PC-9 (cell line): ENCODE measurements at regions of chr6 and their contacts with region 1.

Region 1: DNA sequence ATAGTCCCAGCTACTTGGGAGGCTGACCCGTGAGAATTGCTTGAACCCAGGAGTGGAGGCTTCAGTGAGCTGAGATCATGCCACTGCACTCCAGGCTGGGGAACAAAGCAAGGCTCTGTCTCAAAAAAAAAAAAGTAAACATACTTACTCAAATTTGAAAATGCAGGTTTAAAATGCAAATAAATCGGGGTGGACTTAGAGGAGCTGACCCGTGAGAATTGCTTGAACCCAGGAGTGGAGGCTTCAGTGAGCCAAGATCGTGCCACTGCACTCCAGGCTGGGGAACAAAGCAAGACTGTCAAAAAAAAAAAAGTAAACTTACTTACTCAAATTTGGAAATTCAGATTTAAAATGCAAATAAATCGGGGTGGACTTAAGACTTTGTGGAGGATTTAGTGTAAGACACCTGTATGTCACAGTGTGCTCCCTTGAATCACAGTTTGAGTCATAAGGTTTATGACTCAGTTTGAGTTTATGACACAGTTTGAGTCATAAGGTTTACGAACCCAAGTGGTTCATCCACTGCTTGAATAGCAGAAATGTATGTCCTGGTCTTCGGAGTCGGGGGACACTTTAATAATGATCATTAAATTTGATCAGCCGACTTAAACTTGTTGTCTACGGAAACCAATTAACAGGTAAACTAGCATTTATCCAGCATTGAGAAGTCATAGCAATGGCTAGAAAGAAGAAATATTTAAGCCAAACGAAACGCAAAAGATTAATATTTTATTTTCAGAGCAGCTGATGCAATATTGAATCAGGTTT is 6.7 kb upstream of the MRPS10 start:
- DNase-seq: peak; percentile 20 to 97
- H3K4me3 ChIP-seq: peak overlapping the region; percentile 61
- H3K27ac ChIP-seq: peak overlapping the region; percentile 99
- H3K4me1 ChIP-seq: peaks cover 97% of the 10 kb centered on the region
- H3K27me3 ChIP-seq: no peaks in the 10 kb centered on the region
- CTCF ChIP-seq: no peak

Region 2: DNA sequence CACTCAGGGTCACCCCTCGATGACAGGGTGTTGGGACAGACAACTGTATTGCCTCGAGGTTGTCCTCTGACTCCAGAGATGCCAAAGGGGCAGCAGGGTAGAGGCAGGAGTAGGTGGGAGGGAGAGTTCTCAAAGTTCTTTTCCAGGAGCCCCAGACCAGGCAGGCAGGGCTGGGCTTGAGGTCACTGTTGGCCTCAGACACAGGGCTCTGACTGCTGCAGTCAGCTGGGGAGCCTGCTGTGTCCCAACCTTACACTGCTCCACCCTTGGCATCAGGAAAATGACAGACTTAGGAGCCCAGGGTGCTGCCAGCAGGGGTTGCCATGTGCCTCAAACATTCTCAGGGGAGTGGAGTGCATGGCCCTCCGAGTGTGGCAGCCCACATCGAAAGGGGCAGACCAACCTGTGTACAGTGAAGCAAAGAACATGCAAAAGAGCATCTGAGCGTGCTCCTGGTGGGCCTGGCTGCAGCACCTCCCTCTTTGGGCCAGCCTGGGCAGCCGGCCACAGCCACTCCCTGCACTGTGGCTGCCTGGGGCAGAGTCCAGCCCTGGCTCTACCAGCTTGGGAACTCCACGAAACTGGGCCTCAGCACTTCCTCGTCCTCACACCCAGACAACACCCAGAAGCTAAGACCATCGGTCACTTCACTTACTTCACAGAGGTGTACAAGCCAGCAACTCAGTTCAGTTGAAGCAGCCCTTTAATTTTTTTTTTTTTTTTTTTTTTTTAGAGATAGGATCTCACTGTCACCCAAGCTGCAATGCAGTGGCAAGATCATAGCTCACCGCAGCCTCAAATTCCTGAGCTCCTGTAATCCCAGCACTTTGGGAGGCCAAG is 106.0 kb before region 1 on chr6:
- CTCF ChIA-PET with region 1: interaction called, 17 read pairs
- POLR2A ChIA-PET with region 1: interaction called, 3 read pairs
- intact Hi-C with region 1: loop called (anchors 1 kb)
- DNase-seq: peak; percentile 95 to 99
- H3K4me3 ChIP-seq: no peak overlapping the region
- H3K27ac ChIP-seq: peak overlapping the region; percentile 94
- H3K4me1 ChIP-seq: peaks cover 88% of the 10 kb centered on the region
- H3K27me3 ChIP-seq: no peaks in the 10 kb centered on the region
- CTCF ChIP-seq: no peak

Region 3: GRCh38 chr6:42239351-42240055 is 15.1 kb after region 1 on chr6:
- CTCF ChIA-PET with region 1: interaction called, 3 read pairs
- POLR2A ChIA-PET with region 1: interaction called, 14 read pairs
- intact Hi-C with region 1: no loop called
- DNase-seq: peak; percentile 52 to 87
- H3K4me3 ChIP-seq: no peak overlapping the region
- H3K27ac ChIP-seq: peak overlapping the region; percentile 77
- H3K4me1 ChIP-seq: peaks cover 24% of the 10 kb centered on the region
- H3K27me3 ChIP-seq: no peaks in the 10 kb centered on the region
- CTCF ChIP-seq: no peak

Region 4: DNA sequence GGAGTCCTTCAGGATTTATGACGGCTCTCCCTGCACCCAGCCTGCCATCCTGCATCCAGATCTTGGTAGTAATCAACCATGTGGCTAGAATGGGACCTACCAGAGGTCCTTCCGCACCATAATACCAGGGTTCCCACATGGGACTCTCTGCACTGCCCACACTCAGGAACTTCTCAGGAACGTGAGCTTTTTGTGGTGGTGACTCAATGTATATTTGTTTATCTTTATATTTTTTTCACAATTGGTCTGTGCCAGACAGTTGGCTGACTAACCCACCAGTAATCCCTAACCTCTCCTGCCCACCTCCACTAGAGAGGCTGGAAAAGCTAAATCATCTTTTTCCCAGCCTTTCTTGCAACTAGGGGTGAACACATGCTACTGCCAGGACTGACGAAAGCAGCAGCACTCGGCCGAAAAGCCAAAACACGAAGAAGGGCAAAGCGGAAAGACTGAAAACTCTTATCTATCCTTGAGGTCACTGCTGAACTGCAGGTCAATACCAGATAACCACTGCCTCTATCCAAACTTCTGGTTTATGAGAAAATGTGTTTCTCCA is 114.3 kb after region 1 on chr6:
- CTCF ChIA-PET with region 1: no interaction called
- POLR2A ChIA-PET with region 1: no interaction called
- intact Hi-C with region 1: loop called (anchors 5 kb)
- DNase-seq: peak; percentile 70 to 97
- H3K4me3 ChIP-seq: peak overlapping the region; percentile 15; the same call in 1 of the 2 replicates
- H3K27ac ChIP-seq: peak overlapping the region; percentile 93
- H3K4me1 ChIP-seq: peaks cover 39% of the 10 kb centered on the region
- H3K27me3 ChIP-seq: no peaks in the 10 kb centered on the region
- CTCF ChIP-seq: no peak

Region 5: GRCh38 chr6:42547407-42548329 is 323.3 kb after region 1 on chr6:
- CTCF ChIA-PET with region 1: interaction called, 14 read pairs
- POLR2A ChIA-PET with region 1: interaction called, 17 read pairs
- intact Hi-C with region 1: no loop called
- DNase-seq: peak in 1 of 2 experiments; percentile 83
- H3K4me3 ChIP-seq: peak overlapping the region; percentile 51; the same call in 1 of the 2 replicates
- H3K27ac ChIP-seq: no peak overlapping the region
- H3K4me1 ChIP-seq: no peaks in the 10 kb centered on the region
- H3K27me3 ChIP-seq: no peaks in the 10 kb centered on the region
- CTCF ChIP-seq: peak; percentile 96

Region 6: DNA sequence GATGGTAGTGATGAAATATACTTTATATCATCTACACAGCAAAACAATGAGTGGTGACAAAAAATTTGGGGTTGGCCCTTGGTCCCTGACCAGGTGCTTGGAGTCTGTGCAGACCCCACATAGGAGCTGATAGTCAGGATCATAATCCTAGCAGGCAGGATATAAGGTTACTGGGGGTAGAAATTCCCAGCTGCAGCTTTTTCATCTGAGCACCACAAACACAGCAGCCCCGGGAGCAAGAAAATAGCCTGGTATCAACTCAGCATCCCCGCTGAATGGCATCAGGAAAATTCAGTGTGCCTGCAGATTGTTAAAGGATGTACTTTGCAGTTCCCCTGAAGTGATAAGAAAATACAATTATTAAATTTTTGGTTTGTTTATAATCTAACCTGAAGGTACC is 627.2 kb after region 1 on chr6:
- CTCF ChIA-PET with region 1: no interaction called
- POLR2A ChIA-PET with region 1: no interaction called
- intact Hi-C with region 1: no loop called
- DNase-seq: no peak
- H3K4me3 ChIP-seq: no peak overlapping the region
- H3K27ac ChIP-seq: no peak overlapping the region
- H3K4me1 ChIP-seq: no peaks in the 10 kb centered on the region
- H3K27me3 ChIP-seq: no peaks in the 10 kb centered on the region
- CTCF ChIP-seq: no peak